ENCODE measurements at regions of chr4 and their contacts with region 1.

Region 1: GRCh38 chr4:113384600-113384999 is 335.1 kb downstream of the ANK2 start:
- DNase-seq: peak; percentile 18
- H3K4me3 Mint-ChIP-seq: no peak overlapping the region
- H3K27ac Mint-ChIP-seq: peak overlapping the region; percentile 64
- H3K4me1 Mint-ChIP-seq: peaks cover 32% of the 10 kb centered on the region
- H3K27me3 Mint-ChIP-seq: peaks cover 10% of the 10 kb centered on the region

Region 2: DNA sequence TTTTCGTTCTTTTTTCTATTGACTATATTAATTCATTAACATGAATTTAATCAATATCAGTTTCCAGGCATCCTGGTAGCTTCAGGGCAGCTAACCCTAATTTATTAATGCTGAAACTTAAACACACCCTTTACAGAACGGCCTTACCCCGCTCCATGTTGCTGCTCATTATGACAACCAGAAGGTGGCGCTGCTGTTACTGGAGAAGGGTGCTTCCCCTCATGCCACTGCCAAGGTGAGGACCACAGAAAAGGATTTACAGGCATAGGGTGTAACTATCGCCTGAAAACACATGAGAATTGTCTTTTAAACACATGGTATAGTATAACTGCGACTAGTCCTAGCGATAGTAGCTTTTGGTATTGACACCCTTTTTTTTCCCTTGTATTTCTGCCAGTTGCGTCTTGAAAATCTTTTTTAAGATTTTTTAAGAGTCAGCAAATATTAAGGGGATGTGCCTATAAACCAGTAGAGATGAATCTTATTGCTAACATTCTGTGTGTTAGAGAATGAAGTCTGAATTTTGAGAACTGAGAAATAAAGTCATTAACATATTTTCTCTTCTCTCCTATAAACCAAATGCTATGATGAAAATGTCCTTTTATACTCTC is 106.2 kb before region 1 on chr4:
- CTCF ChIA-PET with region 1: no interaction called
- intact Hi-C with region 1: loop called (anchors 1 kb)
- DNase-seq: peak; percentile 88
- H3K4me3 Mint-ChIP-seq: no peak overlapping the region
- H3K27ac Mint-ChIP-seq: no peak overlapping the region
- H3K4me1 Mint-ChIP-seq: no peaks in the 10 kb centered on the region
- H3K27me3 Mint-ChIP-seq: peaks cover 15% of the 10 kb centered on the region

Region 3: GRCh38 chr4:113446019-113446418 is 61.4 kb after region 1 on chr4:
- CTCF ChIA-PET with region 1: no interaction called
- intact Hi-C with region 1: loop called (anchors 1 kb)
- DNase-seq: no peak
- H3K4me3 Mint-ChIP-seq: no peak overlapping the region
- H3K27ac Mint-ChIP-seq: peak overlapping the region; percentile 66
- H3K4me1 Mint-ChIP-seq: peaks cover 27% of the 10 kb centered on the region
- H3K27me3 Mint-ChIP-seq: no peaks in the 10 kb centered on the region

Region 4: GRCh38 chr4:113539408-113539807 is 154.8 kb after region 1 on chr4:
- CTCF ChIA-PET with region 1: no interaction called
- intact Hi-C with region 1: loop called (anchors 1 kb)
- DNase-seq: peak; percentile 39
- H3K4me3 Mint-ChIP-seq: no peak overlapping the region
- H3K27ac Mint-ChIP-seq: peak overlapping the region; percentile 67
- H3K4me1 Mint-ChIP-seq: peaks cover 33% of the 10 kb centered on the region
- H3K27me3 Mint-ChIP-seq: no peaks in the 10 kb centered on the region

Region 5: DNA sequence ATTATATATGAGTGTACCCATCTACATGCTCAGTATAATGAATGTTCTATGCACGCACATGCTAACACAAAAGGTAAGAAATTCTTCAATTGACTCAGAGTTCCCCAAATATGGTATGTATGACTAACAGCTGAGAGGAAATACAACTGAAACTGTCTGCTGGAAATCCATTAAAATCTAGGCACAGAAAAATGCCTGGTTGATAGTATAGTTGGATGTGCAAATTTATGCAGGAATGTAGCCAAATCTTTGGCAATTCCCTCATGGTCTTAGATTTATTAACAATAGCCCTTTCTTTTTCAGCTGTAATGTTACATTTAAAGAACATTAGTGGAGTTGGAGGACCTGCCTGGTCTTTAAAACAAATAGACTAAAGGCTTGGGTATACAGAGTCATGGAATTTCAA is 371.4 kb after region 1 on chr4:
- CTCF ChIA-PET with region 1: no interaction called
- intact Hi-C with region 1: loop called (anchors 1 kb)
- DNase-seq: no peak
- H3K4me3 Mint-ChIP-seq: no peak overlapping the region
- H3K27ac Mint-ChIP-seq: no peak overlapping the region
- H3K4me1 Mint-ChIP-seq: peaks cover 47% of the 10 kb centered on the region
- H3K27me3 Mint-ChIP-seq: no peaks in the 10 kb centered on the region

Region 6: DNA sequence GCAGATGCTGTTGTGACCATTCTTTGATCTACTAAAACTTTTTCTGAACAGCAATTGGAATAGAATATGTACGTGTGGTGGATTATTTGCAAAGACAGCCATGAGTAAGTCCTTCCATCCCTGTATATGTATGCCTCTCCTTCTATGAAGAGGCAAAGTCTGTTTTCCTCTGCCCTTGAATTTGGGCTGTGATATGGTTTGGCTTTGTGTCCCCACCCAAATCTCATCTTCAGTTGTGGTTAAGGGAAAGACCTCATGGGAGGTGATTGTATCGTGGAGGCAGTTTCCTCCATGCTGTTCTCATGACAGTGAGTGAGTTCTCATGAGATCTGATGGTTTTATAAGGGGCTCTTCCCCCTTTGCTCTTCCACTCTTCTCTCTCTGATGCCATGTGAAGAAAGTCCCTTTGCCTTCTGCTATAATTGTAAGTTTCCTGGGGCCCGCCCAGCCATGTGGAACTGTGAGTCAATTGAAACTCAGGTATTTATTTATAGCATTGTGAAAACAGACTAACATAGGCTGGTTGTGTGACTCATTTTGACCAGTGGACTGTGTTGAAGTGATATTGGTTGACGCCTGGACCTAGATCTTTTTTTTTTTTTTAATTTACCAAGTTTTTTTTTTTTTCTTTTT is 485.3 kb after region 1 on chr4:
- CTCF ChIA-PET with region 1: no interaction called
- intact Hi-C with region 1: loop called (anchors 1 kb)
- DNase-seq: peak; percentile 80
- H3K4me3 Mint-ChIP-seq: no peak overlapping the region
- H3K27ac Mint-ChIP-seq: peak overlapping the region; percentile 82
- H3K4me1 Mint-ChIP-seq: peaks cover 19% of the 10 kb centered on the region
- H3K27me3 Mint-ChIP-seq: no peaks in the 10 kb centered on the region